ENCODE measurements at regions of chr11 and their contacts with region 1.

Region 1: GRCh38 chr11:110200241-110200640 is 96.2 kb downstream of the RDX start:
- DNase-seq: no peak
- ATAC-seq: peak; percentile 31 to 51 (median 32)
- H3K4me3 ChIP-seq: no peak overlapping the region
- H3K27ac ChIP-seq: peak overlapping the region in 2 of 3 donors; percentile 12 to 33
- H3K4me1 ChIP-seq: peaks cover 0 to 8% (median 0%) of the 10 kb centered on the region in 4 donors
- H3K27me3 ChIP-seq: no peaks in the 10 kb centered on the region
- CTCF ChIP-seq: no peak
- POLR2A ChIP-seq: no peak

Region 2: DNA sequence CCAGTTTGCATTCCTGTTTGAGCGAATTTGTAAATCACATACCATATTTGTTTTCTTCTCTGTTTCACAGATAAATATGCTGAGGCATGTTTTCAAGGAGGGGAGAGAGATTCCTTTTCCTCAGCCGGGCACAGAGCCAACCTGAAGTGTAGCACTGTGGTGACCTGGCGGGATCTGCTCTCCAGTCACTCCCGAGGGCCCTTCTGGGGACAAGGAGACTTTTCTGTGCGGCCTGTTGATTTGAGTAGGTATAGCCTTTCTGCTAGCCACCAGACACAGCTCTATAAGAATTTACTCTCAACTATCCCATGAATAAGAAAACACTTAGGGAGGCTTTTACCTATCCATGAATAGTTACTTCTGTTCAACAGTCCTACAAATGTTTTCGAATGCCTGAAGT is 166.1 kb after region 1 on chr11:
- intact Hi-C with region 1: loop called (anchors 5 to 10 kb)
- DNase-seq: peak; percentile 58 to 61 (median 59)
- ATAC-seq: peak; percentile 38 to 58 (median 46)
- H3K4me3 ChIP-seq: no peak overlapping the region
- H3K27ac ChIP-seq: no peak overlapping the region
- H3K4me1 ChIP-seq: peaks cover 0 to 6% (median 2%) of the 10 kb centered on the region in 4 donors
- H3K27me3 ChIP-seq: no peaks in the 10 kb centered on the region
- CTCF ChIP-seq: no peak
- POLR2A ChIP-seq: no peak

Region 3: DNA sequence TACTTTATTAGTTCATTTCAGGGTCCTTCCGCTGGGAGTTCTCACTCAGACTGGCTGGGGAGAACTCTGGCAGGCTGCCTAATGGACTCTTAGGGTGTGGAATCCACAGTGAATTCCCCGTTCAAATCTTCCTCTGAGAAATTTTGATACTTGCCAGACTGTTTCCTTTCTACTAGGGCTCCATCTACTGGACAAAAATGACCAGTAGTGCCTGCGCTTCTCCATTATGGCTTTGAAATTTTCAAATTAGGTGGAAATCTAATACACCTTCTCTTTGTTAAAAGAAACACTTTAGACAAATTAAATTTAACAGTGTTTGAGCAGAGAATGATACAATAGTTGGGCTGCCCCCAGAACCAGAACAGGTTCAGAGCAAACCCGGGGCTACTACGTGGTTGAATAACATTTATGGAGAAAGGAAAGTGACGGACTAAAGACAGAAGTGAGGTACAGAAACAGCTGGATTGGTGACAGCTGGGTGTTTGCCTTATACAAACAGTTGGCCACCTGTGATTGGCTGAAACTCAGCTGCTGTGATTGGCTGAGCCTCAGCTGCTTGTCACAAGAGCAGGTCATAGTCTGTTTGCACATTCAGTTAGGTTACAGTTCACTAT is 176.6 kb after region 1 on chr11:
- intact Hi-C with region 1: loop called in 1 of 2 experiments (anchors 10 kb)
- DNase-seq: peak; percentile 81 to 91 (median 83)
- ATAC-seq: peak; percentile 86 to 92 (median 90)
- H3K4me3 ChIP-seq: peak overlapping the region in 2 of 3 donors; percentile 31
- H3K27ac ChIP-seq: peak overlapping the region; percentile 68 to 83 (median 78)
- H3K4me1 ChIP-seq: peaks cover 0 to 30% (median 10%) of the 10 kb centered on the region in 4 donors
- H3K27me3 ChIP-seq: no peaks in the 10 kb centered on the region
- CTCF ChIP-seq: peak; percentile 81 to 85 (median 84)
- POLR2A ChIP-seq: peak; percentile 53

Measured in right lobe of liver (tissue), 6 donors.